ENCODE measurements at regions of chr12 and their contacts with region 1.

Region 1: DNA sequence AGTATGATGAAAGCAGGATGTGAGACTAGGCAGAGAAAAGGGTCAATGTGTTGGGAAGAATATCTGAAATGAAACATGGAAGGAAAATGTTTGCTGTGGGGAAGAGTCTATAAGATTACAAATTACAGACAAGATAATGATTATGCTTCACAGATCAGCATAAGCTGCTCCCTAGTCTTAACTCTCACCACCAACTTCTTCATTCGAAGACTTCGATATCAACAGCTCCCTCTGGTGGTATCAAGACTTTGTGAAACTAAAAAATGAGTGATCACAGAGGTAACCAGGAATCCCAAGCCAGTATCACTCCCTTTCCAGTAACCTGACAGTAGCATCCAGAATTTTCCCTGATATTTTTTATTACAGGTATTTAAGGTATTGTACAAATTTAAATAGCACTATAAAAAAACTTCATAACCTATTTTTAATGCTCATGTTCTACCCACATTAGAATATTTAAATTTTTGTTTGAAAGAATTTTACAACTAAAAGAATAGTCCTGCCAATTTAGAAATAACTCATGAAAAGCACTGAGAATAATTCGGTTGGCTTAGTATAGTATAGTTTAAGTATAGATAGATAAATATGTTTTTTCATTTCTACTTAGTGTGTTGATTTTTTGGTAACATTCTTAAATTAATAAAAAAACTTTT is 84.4 kb downstream of the C2CD5 start:
- DNase-seq: peak in 2 of 9 experiments; percentile 49 to 60
- ATAC-seq: no peak
- H3K4me3 ChIP-seq: no peak overlapping the region
- H3K4me3 Mint-ChIP-seq: no peak overlapping the region
- H3K27ac ChIP-seq: no peak overlapping the region
- H3K27ac Mint-ChIP-seq: peak overlapping the region; percentile 20
- H3K4me1 ChIP-seq: no peaks in the 10 kb centered on the region
- H3K4me1 Mint-ChIP-seq: no peaks in the 10 kb centered on the region
- H3K27me3 ChIP-seq: no peaks in the 10 kb centered on the region
- H3K27me3 Mint-ChIP-seq: no peaks in the 10 kb centered on the region
- CTCF ChIP-seq: peak; percentile 71

Region 2: DNA sequence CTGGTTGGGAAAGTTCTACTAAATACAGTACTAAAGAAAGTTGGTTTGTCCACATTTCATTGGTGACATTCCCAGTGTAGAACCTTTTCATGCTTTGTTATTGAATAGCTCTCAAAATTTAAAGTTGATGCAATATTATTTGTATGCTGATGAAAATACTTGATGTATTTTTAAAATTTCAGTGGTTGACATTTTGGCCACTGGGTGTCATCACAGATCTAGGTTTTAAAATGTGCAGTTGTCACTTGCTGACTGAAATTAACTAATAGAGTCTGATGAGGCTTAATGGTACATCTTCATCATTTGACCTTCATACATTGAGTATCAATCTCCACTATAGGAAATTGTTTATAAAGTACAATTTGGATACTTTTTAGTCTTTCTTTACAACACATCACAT is 376.8 kb before region 1 on chr12:
- CTCF ChIA-PET with region 1: interaction called, 15 read pairs
- POLR2A ChIA-PET with region 1: no interaction called
- intact Hi-C with region 1: loop called (anchors 1 kb)
- DNase-seq: peak in 4 of 9 experiments; percentile 13 to 63 (median 44)
- ATAC-seq: peak; percentile 49
- H3K4me3 ChIP-seq: no peak overlapping the region
- H3K4me3 Mint-ChIP-seq: no peak overlapping the region
- H3K27ac ChIP-seq: no peak overlapping the region
- H3K27ac Mint-ChIP-seq: no peak overlapping the region
- H3K4me1 ChIP-seq: no peaks in the 10 kb centered on the region
- H3K4me1 Mint-ChIP-seq: no peaks in the 10 kb centered on the region
- H3K27me3 ChIP-seq: no peaks in the 10 kb centered on the region
- H3K27me3 Mint-ChIP-seq: no peaks in the 10 kb centered on the region
- CTCF ChIP-seq: peak; percentile 47

Region 3: DNA sequence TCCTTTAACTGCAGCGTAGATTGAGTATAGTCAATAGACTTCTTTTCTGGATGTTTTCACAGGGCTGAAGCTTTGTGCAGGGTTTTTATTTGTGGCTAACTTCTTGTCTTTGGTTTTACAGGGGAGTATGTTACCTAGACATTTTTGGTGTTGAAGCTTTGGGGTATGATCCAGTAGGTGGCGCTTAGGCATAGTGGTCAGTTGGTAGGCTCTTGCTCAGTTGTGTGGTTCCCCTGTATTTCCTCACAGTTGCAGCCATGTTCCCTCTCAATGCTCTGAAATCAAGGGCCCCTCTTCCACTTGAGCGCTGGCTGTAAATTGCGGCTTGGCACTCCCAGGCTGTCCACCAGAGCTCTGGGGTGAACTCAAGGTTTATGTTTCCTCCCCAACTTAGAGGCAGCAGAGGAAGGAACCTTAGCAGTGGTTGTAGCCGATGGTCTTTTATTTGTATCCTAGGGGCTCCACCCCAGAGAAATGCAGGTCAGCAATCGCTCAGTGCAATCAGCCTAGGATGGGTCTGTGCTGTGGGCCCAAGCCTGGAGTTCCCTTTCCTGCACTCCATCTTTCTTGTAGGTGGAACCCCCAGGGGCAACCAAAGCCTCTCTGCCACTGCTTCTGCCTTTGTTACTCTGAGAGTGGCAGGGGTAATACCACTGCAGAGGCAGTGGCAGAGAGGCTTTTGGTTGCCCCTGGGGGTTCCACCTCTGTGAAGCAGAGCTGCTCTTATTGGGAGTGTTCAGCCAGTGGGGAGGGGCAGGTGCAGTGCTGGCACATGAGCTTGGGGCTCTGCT is 358.8 kb before region 1 on chr12:
- CTCF ChIA-PET with region 1: interaction called, 25 read pairs
- POLR2A ChIA-PET with region 1: no interaction called
- intact Hi-C with region 1: no loop called
- DNase-seq: peak in 7 of 9 experiments; percentile 8 to 75 (median 31)
- ATAC-seq: peak; percentile 51
- H3K4me3 ChIP-seq: no peak overlapping the region
- H3K4me3 Mint-ChIP-seq: no peak overlapping the region
- H3K27ac ChIP-seq: no peak overlapping the region
- H3K27ac Mint-ChIP-seq: no peak overlapping the region
- H3K4me1 ChIP-seq: peaks cover 4% of the 10 kb centered on the region
- H3K4me1 Mint-ChIP-seq: peaks cover 3% of the 10 kb centered on the region
- H3K27me3 ChIP-seq: no peaks in the 10 kb centered on the region
- H3K27me3 Mint-ChIP-seq: no peaks in the 10 kb centered on the region
- CTCF ChIP-seq: no peak